Activated naive CD4-positive, alpha-beta T cell treated with anti-CD3 and anti-CD28 coated beads for 36 hours (primary cell): ENCODE measurements at regions of chr17 and their contacts with region 1.

Region 1: DNA sequence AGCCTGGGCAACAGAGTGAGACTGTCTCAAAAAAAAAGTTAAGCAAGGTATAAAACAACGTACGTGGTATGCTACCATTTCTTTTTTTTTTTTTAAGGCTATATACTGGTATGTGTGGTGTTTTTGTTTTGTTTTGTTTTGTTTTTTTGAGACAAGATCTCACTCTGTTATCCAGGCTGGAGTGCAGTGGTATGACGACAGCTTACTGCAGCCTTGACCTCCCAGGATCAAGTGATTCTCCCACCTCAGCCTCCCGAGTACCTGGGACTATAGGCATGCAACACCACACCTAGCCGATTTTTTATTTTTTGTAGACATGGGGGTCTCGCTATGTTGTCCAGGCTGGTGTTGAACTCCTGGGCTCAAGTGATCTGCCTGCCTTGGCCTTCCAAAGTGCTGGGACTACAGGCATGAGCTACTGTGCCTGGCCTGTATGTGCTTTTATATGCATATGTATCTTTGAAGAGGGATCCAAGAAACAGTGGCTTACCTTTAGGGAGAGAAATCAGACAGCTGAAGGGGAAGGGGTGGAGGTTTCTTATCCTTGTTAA is 6.5 kb downstream of the CENPV start:
- DNase-seq: no peak
- H3K4me3 Mint-ChIP-seq: no peak overlapping the region
- H3K27ac Mint-ChIP-seq: no peak overlapping the region
- H3K4me1 Mint-ChIP-seq: peaks cover 16% of the 10 kb centered on the region
- H3K27me3 Mint-ChIP-seq: no peaks in the 10 kb centered on the region

Region 2: DNA sequence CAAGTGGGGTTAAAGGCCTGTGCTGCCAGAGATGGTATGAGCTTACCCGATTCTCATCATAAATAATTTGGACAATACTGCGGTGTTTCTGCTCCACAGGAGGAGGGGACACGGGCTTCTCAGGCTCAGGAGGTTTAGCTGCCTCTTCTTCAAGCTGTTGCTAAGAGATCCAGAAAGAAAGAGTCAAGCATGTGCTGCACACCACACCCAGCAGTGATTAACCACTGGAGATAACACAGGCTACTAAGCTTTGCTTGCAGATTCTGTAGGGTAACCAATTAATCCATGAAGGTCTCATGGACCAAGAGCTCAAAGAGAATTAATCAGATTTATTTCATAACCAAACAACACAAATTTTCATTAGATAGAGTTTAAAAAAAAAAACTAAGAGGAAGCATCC is 188.1 kb before region 1 on chr17:
- CTCF ChIA-PET with region 1: no interaction called
- intact Hi-C with region 1: no loop called
- DNase-seq: no peak
- H3K4me3 Mint-ChIP-seq: no peak overlapping the region
- H3K27ac Mint-ChIP-seq: no peak overlapping the region
- H3K4me1 Mint-ChIP-seq: peaks cover 7% of the 10 kb centered on the region
- H3K27me3 Mint-ChIP-seq: no peaks in the 10 kb centered on the region

Region 3: GRCh38 chr17:16319969-16320368 is 26.8 kb before region 1 on chr17:
- CTCF ChIA-PET with region 1: interaction called, 4 read pairs
- intact Hi-C with region 1: loop called (anchors 1 kb)
- DNase-seq: no peak
- H3K4me3 Mint-ChIP-seq: no peak overlapping the region
- H3K27ac Mint-ChIP-seq: no peak overlapping the region
- H3K4me1 Mint-ChIP-seq: no peaks in the 10 kb centered on the region
- H3K27me3 Mint-ChIP-seq: no peaks in the 10 kb centered on the region